ENCODE measurements at regions of chr11 and their contacts with region 1.

Region 1: DNA sequence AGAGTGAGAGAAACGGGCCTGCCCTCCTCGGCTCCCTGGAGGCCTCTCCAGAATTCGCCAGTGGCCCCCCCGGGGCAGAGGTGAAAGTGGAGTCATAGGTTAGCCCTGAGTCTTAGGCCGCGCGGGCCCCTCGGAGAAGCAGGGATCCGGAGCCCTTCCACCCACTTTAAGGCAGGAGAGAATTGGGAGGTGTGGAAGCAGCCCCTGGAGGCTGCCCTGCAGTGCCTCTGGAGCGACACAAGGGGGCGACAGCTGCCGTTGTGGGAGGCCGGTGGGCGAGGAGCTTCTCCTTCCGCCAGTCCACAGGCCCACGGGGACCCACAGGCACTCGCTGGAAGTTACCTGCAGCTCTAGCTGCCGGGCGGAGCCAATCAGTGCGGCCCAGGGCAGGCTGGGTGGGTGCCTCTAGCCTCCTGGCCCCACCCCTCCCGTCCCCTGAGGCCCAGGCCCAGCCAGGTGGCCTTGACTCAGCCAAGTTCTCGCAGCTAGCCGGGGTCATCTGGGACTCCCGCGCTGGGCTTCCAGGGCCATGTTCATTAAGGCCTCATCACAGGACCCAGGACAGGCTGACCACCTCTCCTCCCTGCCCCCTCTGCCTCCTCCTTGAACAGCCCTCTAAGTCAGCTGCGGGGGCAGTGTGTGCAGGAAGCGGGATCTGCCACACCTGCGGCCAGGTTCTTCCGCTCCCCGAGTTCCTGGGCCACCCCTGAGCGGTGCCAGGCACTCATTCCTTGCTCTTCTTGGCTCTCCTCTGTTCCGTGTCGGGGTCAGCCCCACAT is 5.0 kb downstream of the DGKZ start:
- DNase-seq: peak; percentile 79

Region 2: DNA sequence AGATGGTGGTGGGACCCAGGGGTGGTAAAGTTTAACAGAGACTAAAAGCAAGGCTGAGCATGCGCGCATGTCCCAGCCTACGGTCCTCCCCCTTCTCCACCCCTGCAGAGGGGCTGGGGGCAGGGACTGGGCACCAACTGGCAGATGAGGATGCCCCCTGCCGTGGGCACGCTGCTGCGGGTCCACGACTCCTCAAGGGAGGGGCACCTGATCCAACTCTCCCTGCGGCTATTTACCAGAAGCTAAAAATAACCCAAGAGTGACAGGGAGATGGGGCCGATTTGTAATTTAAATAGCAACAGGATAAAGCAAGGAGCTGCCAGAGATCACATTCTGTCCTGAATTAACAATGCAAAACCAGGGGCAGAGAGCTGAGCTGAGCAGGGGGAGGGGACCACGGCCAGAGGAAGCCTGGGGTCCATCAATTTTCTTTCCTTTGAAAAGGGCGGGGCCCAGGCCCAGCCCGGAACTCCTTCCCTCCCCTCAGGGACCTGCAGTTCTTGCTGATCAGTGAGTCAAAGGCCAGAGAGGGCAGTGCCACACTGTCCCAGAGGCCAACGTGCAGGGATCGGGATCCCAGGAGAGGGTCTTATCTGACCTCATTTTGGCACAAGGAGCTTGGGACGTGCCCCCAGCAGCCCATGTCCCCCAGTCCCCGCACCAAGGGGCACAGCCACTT is 13.1 kb before region 1 on chr11:
- CTCF ChIA-PET with region 1: interaction called, 12 read pairs
- POLR2A ChIA-PET with region 1: interaction called, 3 read pairs
- DNase-seq: no peak

Region 3: DNA sequence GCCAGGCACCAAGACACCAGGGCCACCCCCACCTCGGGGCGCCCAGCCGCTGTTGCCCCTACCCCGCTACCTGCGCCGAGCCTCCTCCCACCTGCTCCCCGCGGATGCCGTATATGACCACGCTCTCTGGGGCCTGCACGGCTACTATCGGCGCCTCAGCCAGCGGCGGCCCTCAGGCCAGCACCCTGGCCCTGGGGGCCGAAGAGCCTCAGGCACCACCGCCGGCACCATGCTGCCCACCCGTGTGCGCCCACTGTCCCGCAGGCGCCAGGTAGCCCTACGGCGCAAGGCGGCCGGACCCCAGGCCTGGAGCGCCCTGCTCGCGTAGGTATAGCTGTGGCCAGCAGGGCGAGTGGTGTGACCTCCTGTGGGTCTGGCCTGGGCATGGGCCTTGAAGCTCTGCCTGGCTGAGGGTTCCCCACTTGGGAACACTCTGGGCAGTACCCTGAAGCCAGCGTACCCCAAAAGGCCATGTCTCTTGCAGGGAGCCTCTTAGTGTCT is 14.5 kb after region 1 on chr11:
- CTCF ChIA-PET with region 1: interaction called, 30 read pairs
- POLR2A ChIA-PET with region 1: interaction called, 7 read pairs
- DNase-seq: no peak